Activated CD4-positive, alpha-beta memory T cell treated with anti-CD3 and anti-CD28 coated beads for 36 hours (primary cell): ENCODE measurements at regions of chr15 and their contacts with region 1.

Region 1: GRCh38 chr15:94174399-94174802 is 57.0 kb upstream of the MCTP2 start:
- DNase-seq: peak; percentile 38
- H3K4me3 Mint-ChIP-seq: no peak overlapping the region
- H3K27ac Mint-ChIP-seq: no peak overlapping the region
- H3K4me1 Mint-ChIP-seq: peaks cover 10% of the 10 kb centered on the region
- H3K27me3 Mint-ChIP-seq: peaks cover 9% of the 10 kb centered on the region

Region 2: GRCh38 chr15:94206463-94207167 is 32.2 kb after region 1 on chr15:
- CTCF ChIA-PET with region 1: no interaction called
- POLR2A ChIA-PET with region 1: no interaction called
- intact Hi-C with region 1: loop called (anchors 1 kb)
- DNase-seq: peak; percentile 71
- H3K4me3 Mint-ChIP-seq: no peak overlapping the region
- H3K27ac Mint-ChIP-seq: peak overlapping the region; percentile 78
- H3K4me1 Mint-ChIP-seq: peaks cover 18% of the 10 kb centered on the region
- H3K27me3 Mint-ChIP-seq: peaks cover 18% of the 10 kb centered on the region

Region 3: DNA sequence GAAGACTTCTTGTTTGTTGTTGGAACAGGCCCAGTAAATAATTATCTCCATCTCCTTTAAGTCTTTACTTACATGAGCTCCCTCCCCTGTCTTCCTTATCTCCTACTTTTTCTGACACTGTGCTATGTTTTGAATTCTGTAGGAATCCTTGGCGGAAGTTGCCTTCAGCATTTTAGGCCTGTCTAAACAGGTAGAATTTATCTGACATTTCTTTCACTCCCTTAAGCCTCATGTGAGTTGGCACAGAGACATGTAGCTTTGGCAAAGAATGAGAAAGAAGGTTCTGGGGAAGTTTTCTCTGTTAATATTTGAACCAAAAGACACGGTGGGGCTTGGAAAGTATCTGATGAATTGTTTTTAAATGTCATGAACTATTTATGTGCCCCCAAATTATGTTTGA is 65.1 kb after region 1 on chr15:
- CTCF ChIA-PET with region 1: no interaction called
- POLR2A ChIA-PET with region 1: no interaction called
- intact Hi-C with region 1: no loop called
- DNase-seq: no peak
- H3K4me3 Mint-ChIP-seq: no peak overlapping the region
- H3K27ac Mint-ChIP-seq: no peak overlapping the region
- H3K4me1 Mint-ChIP-seq: peaks cover 58% of the 10 kb centered on the region
- H3K27me3 Mint-ChIP-seq: no peaks in the 10 kb centered on the region

Region 4: GRCh38 chr15:94272251-94272898 is 98.0 kb after region 1 on chr15:
- CTCF ChIA-PET with region 1: no interaction called
- POLR2A ChIA-PET with region 1: no interaction called
- intact Hi-C with region 1: loop called (anchors 1 kb)
- DNase-seq: no peak
- H3K4me3 Mint-ChIP-seq: no peak overlapping the region
- H3K27ac Mint-ChIP-seq: no peak overlapping the region
- H3K4me1 Mint-ChIP-seq: peaks cover 20% of the 10 kb centered on the region
- H3K27me3 Mint-ChIP-seq: no peaks in the 10 kb centered on the region